ENCODE measurements at regions of chr6 and their contacts with region 1.

Region 1: DNA sequence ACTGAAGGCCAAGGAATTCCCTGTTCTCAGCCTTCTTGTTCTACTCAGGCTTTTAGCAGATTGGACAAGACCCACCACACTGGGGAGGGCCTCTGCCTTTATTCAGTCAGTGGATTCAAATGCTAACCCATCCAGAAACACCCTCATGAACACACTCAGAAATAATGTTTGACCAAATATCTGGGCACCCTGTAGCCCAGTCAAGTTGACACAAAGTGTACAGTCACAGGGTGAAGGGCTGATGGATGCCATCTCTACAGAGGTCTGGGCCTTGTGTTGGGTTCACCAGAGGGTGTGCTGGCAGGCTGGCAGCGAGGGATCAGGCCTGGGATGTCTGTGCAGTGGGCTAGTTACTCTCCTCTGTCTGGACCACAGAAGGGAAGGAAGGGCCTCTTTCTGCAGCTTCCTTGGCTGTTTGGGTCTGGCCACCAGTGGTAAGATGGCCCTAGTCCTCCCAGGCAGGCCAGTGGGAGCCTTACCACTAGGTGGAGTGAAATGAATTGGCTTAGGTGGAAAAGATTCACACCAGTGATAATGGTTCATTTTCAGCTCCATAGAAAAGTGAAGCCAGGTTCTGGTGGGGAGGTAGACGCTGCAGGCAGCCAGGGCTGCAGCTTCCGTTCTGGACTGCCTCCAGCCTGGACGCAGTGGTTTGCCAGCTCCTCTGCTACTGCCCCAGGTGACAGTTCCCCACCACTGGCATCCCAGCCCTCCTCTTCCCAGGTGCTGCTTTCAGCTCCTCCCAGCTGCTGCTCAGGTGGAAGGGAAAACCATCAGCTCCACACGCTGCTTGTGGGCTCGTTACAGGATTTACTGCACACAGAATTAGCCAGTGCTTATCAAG is 9.2 kb downstream of the TUBB2A start:
- DNase-seq: no peak
- H3K4me3 ChIP-seq: no peak overlapping the region
- H3K27ac ChIP-seq: no peak overlapping the region
- H3K4me1 ChIP-seq: peaks cover 2 to 7% (median 3%) of the 10 kb centered on the region in 4 experiments; a peak in 6 of 7 replicates
- H3K27me3 ChIP-seq: no peaks in the 10 kb centered on the region
- CTCF ChIP-seq: peak in 2 of 3 experiments; percentile 13 to 26; a peak in 2 of 4 replicates
- EP300 ChIP-seq: no peak
- POLR2A ChIP-seq: no peak
- RAD21 ChIP-seq: peak; percentile 23 to 30; a peak in 3 of 4 replicates

Region 2: DNA sequence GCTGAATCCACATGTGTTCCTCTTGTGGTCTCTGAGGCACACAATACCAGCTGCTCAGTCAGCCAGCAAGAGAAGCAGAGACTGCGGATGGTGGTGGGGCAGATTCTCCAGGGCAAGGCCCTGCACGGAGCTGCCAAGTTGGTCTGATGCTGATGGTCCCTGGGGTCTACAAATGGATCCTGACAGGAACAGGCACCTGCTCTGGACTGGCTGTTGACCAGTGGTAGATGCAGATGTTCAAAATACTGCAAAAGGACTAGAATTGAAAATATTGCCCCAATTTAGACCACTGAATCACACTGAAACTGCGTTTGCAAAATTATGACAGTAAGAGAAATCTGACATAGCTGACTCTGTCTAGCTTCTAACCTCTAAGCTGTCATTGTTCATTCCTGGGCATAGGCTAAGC is 38.8 kb after region 1 on chr6:
- CTCF ChIA-PET with region 1: no interaction called
- POLR2A ChIA-PET with region 1: no interaction called
- DNase-seq: no peak
- H3K4me3 ChIP-seq: no peak overlapping the region
- H3K27ac ChIP-seq: no peak overlapping the region
- H3K4me1 ChIP-seq: no peaks in the 10 kb centered on the region
- H3K27me3 ChIP-seq: peaks cover 0 to 2% (median 0%) of the 10 kb centered on the region in 4 experiments; a peak in 1 of 7 replicates
- CTCF ChIP-seq: no peak
- EP300 ChIP-seq: no peak
- POLR2A ChIP-seq: no peak
- RAD21 ChIP-seq: no peak

Region 3: DNA sequence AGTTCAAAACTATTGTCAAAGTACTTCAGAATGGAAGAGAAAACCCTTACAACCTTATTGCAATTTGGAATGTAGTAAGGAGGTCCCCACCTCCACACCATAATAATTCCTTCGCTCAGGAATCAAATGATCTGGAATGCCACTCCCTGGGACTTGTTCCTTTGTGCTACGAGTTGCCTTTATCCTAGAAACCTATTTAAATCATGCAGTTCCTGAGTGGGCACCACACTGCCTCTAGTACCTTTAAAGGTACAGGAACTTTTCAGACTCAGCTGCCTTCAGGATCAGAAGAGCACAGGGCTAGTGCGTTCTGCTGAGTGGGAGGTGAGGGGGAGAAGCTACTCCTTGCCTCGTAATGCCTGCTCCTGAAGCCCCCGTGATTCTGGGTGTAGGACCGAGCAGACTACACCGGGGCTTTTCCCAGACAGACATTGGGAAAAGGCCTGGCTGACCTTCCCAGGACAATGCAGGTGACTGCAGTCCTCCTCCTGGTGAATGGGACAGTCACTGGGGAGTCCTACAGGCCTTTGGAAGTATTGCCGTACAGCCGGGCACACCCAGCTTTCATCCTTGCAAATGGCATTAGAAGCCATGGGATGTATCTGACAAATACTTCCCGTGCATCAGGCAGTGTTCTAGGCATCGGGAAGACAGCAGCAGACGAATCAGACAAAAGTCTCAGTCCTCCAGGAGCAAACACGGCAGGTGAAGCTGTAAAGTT is 91.1 kb after region 1 on chr6:
- CTCF ChIA-PET with region 1: interaction called, 24 read pairs
- POLR2A ChIA-PET with region 1: interaction called, 3 read pairs
- DNase-seq: no peak
- H3K4me3 ChIP-seq: no peak overlapping the region
- H3K27ac ChIP-seq: no peak overlapping the region
- H3K4me1 ChIP-seq: peaks cover 0 to 5% (median 0%) of the 10 kb centered on the region in 4 experiments; a peak in 3 of 7 replicates
- H3K27me3 ChIP-seq: no peaks in the 10 kb centered on the region
- CTCF ChIP-seq: peak; percentile 43 to 68 (median 57)
- EP300 ChIP-seq: no peak
- POLR2A ChIP-seq: no peak
- RAD21 ChIP-seq: peak; percentile 47 to 67